Esophagus squamous epithelium (tissue), 5 donors: ENCODE measurements at regions of chr19 and their contacts with region 1.

Region 1: DNA sequence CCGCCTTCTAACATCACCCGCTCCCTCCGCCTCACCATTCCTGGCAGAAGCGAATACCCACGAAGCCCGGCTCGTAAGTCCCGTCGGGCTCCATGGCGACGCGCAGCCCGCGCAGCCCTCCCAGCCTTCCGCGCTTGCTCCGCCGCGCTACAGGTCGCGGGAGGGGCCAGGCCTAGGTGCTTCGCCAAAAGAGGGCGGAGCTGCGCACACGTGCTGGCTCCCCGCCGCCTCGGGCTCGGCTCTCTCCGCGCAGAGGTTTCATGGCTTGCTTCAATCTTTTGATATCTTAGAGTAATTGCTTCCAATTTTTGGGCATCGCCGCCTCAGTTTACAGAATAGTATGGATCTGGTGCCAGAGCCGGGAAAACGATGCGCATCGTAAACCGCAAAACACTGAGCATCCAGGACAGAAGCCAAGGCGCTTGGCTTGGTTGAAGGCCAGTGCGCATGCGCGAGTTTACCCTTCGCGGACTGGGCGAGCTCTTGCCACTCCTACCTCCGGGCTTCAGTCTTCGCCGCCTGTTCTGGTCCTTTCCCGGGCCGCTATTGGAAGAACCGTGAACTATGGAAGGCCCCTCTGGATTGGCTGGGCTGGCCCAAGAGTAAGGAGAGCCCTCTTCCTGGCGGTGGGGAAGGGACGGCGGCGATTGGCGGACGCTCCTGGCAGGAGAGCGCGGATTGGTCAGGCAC is at the start of gene POLR2I:
- DNase-seq: peak; percentile 94
- H3K4me3 ChIP-seq: peak within 1 kb of the TSS; percentile 77 to 92 (median 86)
- H3K27ac ChIP-seq: peak within 1 kb of the TSS; percentile 93 to 96 (median 94)
- H3K4me1 ChIP-seq: peaks cover 22 to 37% (median 24%) of the 10 kb centered on the region in 3 donors
- H3K27me3 ChIP-seq: no peaks in the 10 kb centered on the region
- CTCF ChIP-seq: peak in 2 of 6 experiments; percentile 1 to 12
- POLR2A ChIP-seq: peak in 3 of 4 donors; percentile 58 to 82 (median 74)
- total RNA-seq, gene POLR2I: 41.7 to 58.0 (median 47.6) TPM

Region 2: DNA sequence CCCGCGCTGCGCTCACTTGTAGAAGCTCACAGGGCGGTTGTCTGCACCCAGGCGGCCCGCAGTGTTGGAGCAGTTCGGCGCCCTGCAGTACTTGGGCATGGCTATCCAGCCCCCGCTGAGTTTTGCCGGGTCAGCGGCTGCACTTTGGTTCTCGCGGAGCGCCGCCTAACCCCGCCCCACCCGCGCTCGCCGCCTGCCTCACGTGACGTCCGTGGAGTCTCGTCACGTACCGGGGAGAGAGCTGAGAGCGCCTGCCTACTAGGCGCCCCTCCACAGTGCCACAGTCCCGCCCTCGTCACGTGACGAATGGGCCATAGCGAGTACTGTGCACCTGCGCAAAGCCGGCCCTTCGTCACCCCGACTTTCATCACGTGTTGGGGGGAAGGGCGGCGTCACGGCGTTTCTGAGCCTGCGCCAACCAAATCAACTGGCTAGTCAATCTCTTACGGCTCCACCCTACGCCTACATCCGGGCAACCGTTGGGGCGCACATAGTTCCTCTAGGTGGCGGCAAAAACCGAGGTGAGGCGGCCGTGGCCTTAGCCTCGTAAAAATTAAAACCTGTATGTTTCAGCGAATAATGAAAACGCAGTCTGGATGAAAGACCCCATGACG is 60.7 kb before region 1 on chr19 and contains the start of gene THAP8:
- intact Hi-C with region 1: loop called (anchors 10 kb)
- DNase-seq: peak; percentile 98
- H3K4me3 ChIP-seq: peak within 1 kb of the TSS; percentile 61 to 90 (median 70)
- H3K27ac ChIP-seq: peak within 1 kb of the TSS; percentile 94 to 99 (median 96)
- H3K4me1 ChIP-seq: peaks cover 12 to 30% (median 18%) of the 10 kb centered on the region in 3 donors
- H3K27me3 ChIP-seq: no peaks in the 10 kb centered on the region
- CTCF ChIP-seq: peak; percentile 26 to 69 (median 62)
- POLR2A ChIP-seq: peak in 2 of 4 donors; percentile 60 to 72
- total RNA-seq, gene THAP8: 2.8 to 4.8 (median 3.6) TPM